Esophagus muscularis mucosa (tissue), 4 donors: ENCODE measurements at regions of chr9 and their contacts with region 1.

Region 1: GRCh38 chr9:36487482-36488388 is 85.0 kb upstream of the MELK start:
- DNase-seq: peak; percentile 93
- H3K4me3 ChIP-seq: peak overlapping the region; percentile 83 to 97 (median 88)
- H3K27ac ChIP-seq: peak overlapping the region; percentile 90 to 95 (median 92)
- H3K4me1 ChIP-seq: peaks cover 24 to 60% (median 45%) of the 10 kb centered on the region in 4 donors
- H3K27me3 ChIP-seq: no peaks in the 10 kb centered on the region
- CTCF ChIP-seq: peak in 2 of 3 experiments; percentile 9 to 16
- EP300 ChIP-seq: no peak
- POLR2A ChIP-seq: no peak

Region 2: DNA sequence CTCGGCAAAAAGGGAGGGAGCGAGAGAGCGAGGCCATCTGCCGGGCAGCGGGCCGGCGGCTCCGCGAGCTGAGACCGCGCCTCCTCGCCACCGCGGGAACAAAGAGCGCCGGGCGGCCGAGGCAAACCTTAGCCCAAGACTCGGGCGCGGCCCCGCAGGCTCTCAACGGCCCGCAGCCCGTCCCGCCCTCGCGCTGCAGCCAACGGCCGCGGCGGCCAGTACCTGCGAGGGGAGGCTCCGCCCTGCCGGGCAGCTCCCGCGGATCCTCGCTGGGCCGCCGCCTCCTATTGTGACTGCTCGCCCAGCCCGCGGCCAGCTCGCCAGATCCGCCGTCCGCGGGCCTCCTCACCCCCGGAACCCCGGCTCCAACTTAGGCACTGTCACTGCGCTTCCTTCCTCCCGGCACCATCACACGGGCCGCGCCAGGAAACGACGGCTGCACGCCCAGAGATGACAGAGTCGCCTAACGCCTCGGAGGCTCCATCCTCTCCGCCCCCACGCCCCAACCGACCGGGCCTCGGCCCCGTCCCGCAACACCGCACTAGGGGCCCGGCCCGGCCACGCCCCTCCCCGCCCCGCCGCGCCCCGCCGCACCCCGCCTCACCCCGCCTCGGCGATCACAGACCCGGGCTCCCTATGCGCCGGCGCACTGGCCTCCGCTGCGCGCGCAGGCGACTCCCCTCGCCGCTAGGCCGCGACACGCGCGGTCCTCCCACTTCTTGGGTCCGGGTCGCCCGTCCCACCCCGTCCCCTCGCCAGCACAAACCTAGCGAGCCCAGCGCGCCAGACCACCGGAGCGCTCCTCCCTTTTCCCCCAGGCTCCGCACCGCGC is 87.2 kb before region 1 on chr9:
- intact Hi-C with region 1: loop called (anchors 5 kb)
- DNase-seq: peak; percentile 94
- H3K4me3 ChIP-seq: peak overlapping the region; percentile 83 to 91 (median 86)
- H3K27ac ChIP-seq: peak overlapping the region; percentile 91 to 98 (median 95)
- H3K4me1 ChIP-seq: peaks cover 16 to 50% (median 39%) of the 10 kb centered on the region in 4 donors
- H3K27me3 ChIP-seq: no peaks in the 10 kb centered on the region
- CTCF ChIP-seq: peak in 1 of 3 experiments; percentile 8
- EP300 ChIP-seq: no peak
- POLR2A ChIP-seq: no peak

Region 3: GRCh38 chr9:36566813-36567221 is 79.1 kb after region 1 on chr9:
- intact Hi-C with region 1: loop called (anchors 10 kb)
- DNase-seq: no peak
- H3K4me3 ChIP-seq: no peak overlapping the region
- H3K27ac ChIP-seq: peak overlapping the region; percentile 46 to 67 (median 62)
- H3K4me1 ChIP-seq: peaks cover 0 to 10% (median 9%) of the 10 kb centered on the region in 4 donors
- H3K27me3 ChIP-seq: no peaks in the 10 kb centered on the region
- CTCF ChIP-seq: no peak
- EP300 ChIP-seq: no peak
- POLR2A ChIP-seq: no peak